HEK293T (cell line): ENCODE measurements at regions of chr14 and their contacts with region 1.

Region 1: DNA sequence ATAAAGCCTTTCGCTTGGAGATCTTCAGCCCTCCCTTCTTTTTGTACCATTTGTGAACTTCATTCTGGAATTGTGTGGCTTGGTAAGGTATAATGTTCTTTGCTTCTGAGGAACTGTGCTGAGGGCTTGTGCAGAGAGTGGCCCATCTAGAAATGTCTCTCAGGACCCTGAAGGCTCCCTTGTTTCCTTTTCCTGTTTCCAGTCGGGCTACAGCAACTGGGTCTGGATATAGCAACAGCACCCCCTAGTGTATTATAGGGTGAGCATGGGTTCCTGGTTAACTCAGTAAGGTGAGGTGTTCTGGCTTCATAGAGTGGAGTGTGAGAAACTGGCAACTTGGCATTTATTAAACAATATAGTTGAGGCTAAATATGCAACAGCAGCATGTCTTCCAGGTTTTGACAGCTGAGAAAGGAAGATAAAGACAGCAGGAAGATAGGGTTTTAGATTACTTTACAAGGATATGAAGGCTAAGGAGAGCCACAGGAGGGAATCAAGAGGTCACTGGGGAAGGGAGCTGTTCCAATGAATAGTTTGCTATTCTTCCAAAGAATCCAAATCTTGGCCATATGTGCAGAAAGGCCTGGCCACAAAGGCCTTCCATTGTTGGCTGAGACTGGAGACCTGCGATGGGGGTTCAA is 49.1 kb upstream of the RNU6-8 start:
- DNase-seq: peak; percentile 72

Region 2: DNA sequence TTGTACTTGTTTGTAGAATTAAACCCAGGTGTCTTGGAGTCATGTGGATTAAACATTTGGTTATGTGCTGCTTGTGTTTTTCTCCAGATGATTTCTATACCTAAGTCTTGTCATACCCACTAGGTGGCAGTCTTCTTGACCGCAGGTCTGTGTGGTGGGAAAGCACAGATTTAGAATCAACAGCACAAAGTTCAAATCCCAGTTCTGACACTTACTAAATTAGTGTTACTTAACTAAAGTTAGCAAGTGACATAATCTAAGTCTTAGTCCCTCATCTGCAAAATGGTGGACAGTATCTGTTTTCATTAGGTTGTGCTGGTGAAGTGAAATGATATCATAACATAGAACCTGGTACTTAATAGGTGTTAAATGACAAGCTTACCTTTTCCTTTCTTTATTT is 326.0 kb before region 1 on chr14:
- CTCF ChIA-PET with region 1: interaction called, 10 read pairs
- POLR2A ChIA-PET with region 1: no interaction called
- DNase-seq: peak; percentile 58

Region 3: GRCh38 chr14:31934767-31935266 is 317.3 kb before region 1 on chr14:
- CTCF ChIA-PET with region 1: interaction called, 21 read pairs
- POLR2A ChIA-PET with region 1: no interaction called
- DNase-seq: peak; percentile 46

Region 4: GRCh38 chr14:32217301-32217700 is 34.8 kb before region 1 on chr14:
- CTCF ChIA-PET with region 1: no interaction called
- POLR2A ChIA-PET with region 1: no interaction called
- DNase-seq: no peak

Region 5: GRCh38 chr14:32469388-32470160 is 217.4 kb after region 1 on chr14:
- CTCF ChIA-PET with region 1: interaction called, 13 read pairs
- POLR2A ChIA-PET with region 1: no interaction called
- DNase-seq: peak; percentile 16